ENCODE measurements at regions of chr18 and their contacts with region 1.

Region 1: DNA sequence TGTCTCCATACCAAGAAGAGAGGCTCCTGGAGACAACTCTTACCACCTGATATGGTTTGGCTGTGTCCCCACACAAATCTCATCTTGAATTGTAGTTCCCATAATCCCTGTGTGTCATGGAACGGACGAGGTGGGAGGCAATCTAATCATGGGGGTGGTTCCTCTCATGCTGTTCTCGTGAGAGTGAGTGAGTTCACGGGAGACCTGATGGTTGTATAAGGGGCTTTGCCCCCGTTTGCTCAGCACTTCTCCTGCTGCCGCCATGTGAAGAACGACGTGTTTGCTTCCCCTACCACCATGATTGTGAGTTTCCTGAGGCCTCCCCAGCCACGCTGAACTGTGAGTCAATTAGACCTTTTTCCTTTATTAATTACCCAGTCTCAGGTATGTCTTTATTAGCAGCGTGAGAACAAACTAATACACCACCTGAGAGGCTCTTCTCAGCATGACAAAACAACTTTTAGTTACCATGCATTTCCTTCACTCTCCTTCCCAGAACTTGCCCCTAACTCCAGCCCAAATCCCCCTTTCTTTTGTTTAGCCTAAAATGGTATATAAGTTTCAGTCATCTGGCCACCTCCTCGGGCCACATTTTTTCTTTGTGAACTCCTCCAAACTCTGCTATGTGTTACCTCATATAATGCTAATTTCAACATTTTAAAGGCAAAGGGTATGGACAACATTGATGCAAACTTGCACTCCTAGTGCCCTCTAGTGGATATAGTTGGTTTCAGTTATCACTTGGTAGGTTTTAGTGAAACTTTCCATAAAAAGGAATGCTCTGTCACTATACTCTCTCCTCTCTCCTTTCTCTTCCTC is 58.6 kb upstream of the SLC25A52 start:
- DNase-seq: no peak
- H3K4me3 Mint-ChIP-seq: no peak overlapping the region
- H3K27ac Mint-ChIP-seq: no peak overlapping the region
- H3K4me1 Mint-ChIP-seq: peaks cover 8% of the 10 kb centered on the region
- H3K27me3 Mint-ChIP-seq: no peaks in the 10 kb centered on the region
- CTCF ChIP-seq: peak; percentile 57

Region 2: DNA sequence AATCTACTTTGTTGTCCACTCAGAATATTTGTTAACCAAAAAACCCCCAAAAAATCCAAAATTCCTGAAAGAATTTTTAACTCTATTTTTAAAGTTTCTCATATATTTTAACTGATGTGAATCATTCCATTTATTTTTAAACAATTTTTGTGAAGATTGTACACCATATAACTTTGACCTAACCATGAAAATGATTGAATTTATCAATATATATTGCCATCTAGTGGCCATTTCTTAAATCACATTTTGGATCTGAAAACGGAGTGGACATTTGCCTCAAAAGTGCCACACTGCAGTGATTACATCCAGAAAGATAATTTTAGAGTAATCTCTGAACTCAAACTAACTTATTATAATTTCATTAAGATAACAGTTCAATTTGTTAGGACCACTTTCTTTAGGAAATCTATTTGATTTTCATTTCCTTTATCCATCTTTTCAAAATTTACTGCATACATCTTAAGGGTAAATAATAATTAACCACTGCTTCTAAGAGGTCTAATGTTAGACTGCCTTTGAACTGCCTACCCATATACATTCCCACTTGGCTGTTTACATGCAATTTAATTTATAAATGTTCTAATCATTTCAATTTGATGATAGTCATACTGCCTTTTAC is 847.9 kb before region 1 on chr18:
- CTCF ChIA-PET with region 1: no interaction called
- intact Hi-C with region 1: loop called (anchors 10 kb)
- DNase-seq: no peak
- H3K4me3 Mint-ChIP-seq: no peak overlapping the region
- H3K27ac Mint-ChIP-seq: no peak overlapping the region
- H3K4me1 Mint-ChIP-seq: no peaks in the 10 kb centered on the region
- H3K27me3 Mint-ChIP-seq: no peaks in the 10 kb centered on the region
- CTCF ChIP-seq: peak; percentile 29

Region 3: DNA sequence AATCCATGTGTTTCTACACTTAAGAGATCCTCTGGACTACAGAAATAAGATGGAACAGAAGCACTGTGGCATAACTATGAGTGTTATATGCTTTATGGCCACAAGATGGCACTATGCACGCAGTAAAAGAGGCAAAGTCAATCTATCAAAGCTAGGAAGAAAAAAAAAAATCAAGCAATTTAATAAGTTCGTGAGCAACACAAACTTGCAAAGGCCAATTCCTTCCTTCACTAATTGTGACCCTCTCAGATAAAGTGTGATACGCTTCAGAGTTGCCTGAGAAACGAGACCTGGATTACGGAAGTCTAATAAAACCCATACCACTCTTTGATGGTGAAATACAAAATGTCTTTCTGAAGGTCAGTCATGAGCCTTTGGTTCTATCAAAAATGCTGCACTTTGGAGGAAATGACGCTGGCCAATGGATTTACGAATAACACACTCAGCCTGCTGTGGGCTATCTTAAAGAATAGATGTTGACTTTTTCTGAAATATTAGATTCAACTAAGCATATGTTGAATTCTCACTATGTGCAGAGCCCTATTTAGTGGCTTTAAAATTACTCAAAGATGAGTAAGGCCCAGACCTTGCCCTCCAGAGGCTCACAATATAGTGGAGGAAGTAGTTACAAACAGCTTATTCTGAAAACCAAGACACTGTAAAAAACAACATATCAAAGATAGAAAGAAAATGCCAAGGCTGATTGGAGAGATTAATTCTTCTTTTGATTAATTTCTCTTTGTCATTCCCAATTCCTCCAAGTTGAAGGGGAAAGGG is 263.2 kb before region 1 on chr18:
- CTCF ChIA-PET with region 1: interaction called, 3 read pairs
- intact Hi-C with region 1: loop called (anchors 1 kb)
- DNase-seq: peak; percentile 55
- H3K4me3 Mint-ChIP-seq: no peak overlapping the region
- H3K27ac Mint-ChIP-seq: no peak overlapping the region
- H3K4me1 Mint-ChIP-seq: peaks cover 28% of the 10 kb centered on the region
- H3K27me3 Mint-ChIP-seq: no peaks in the 10 kb centered on the region
- CTCF ChIP-seq: peak; percentile 63

Region 4: DNA sequence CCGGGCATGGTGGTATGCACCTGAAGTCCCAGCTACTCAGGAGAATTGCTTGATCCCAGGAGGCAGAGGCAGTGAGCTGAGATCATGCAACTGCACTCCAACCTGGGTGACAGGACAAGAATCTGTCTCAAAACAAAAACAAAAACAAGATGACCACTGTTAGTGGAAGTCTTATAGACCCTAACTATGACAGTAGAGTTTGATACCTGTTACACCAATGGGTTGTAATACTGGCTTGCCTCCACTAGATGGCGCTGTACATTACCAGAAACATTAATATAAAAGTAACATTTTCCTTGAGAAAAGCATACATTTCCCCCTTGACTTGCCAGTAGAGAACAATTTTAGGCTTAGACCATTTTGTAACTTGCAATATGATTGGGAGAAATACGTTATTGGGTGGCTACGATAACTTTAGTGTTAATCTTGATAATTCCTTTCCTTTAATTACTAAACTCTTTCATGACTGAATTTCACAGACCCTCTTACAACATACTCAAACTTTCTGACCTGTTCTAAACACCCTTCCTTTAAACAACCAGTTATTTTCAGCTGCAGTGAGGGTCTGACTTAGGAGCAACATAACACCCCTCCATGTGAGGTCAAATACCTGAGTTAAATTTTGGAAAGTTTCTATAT is 78.1 kb before region 1 on chr18:
- CTCF ChIA-PET with region 1: interaction called, 3 read pairs
- intact Hi-C with region 1: loop called (anchors 1 kb)
- DNase-seq: peak; percentile 41
- H3K4me3 Mint-ChIP-seq: no peak overlapping the region
- H3K27ac Mint-ChIP-seq: no peak overlapping the region
- H3K4me1 Mint-ChIP-seq: no peaks in the 10 kb centered on the region
- H3K27me3 Mint-ChIP-seq: peaks cover under 1% of the 10 kb centered on the region
- CTCF ChIP-seq: peak; percentile 89

Region 5: GRCh38 chr18:31857526-31858106 is 38.3 kb after region 1 on chr18:
- CTCF ChIA-PET with region 1: interaction called, 12 read pairs
- intact Hi-C with region 1: no loop called
- DNase-seq: no peak
- H3K4me3 Mint-ChIP-seq: no peak overlapping the region
- H3K27ac Mint-ChIP-seq: no peak overlapping the region
- H3K4me1 Mint-ChIP-seq: no peaks in the 10 kb centered on the region
- H3K27me3 Mint-ChIP-seq: no peaks in the 10 kb centered on the region
- CTCF ChIP-seq: no peak

Measured in Calu3 (cell line).